IMR-90 (cell line): ENCODE measurements at regions of chr2 and their contacts with region 1.

Region 1: DNA sequence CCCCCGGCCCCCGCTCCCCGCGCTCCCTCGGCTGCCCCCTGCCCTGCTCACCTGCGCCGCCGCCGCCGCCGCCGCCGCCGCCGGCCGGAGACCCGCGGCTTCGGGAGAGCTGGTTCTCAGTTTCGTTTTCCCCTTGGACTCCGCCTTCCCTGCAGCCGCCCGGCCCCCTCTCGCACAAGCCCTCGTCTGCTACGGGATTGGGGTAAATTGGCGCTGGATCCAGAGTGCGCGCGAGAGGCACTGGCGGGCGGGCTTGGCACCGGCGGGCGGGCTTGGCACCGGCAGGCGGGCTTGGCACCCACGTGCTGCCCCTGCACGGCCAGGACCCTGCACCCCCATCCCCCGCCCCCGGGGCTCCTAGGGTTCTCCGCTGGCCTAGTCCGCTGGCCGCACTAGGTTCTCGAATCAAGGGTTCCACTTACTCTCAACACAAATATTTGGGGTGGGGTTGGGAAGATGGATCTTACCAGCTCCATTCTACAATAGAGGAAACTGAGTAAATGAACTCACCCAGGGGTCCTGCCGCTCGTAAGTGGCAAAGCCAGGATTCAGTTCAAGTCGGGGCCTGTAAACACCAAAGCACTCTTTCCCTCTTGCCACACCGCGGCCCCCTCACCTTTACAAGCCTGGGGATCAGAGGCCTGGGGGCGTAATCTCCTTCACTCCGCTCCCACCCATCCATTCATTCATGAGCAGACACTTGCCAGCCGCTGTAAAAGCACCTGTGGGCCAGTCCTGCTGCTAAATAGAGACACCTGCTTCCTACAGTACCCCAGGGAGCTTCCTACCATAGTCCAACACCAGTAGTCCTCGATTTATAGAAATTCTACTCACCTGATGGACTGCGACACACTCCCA is at the start of gene EIF2AK2:
- DNase-seq: peak; percentile 76
- ATAC-seq: peak; percentile 98
- H3K4me3 ChIP-seq: peak within 1 kb of the TSS; percentile 83
- H3K27ac ChIP-seq: peak within 1 kb of the TSS; percentile 69
- H3K4me1 ChIP-seq: peaks cover 5% of the 10 kb centered on the region; the same call in 1 of the 2 replicates
- H3K27me3 ChIP-seq: no peaks in the 10 kb centered on the region
- CTCF ChIP-seq: no peak
- POLR2A ChIP-seq: no peak
- RAD21 ChIP-seq: no peak
- total RNA-seq, gene EIF2AK2: 16.8 and 32.2 TPM in 2 replicates

Region 2: DNA sequence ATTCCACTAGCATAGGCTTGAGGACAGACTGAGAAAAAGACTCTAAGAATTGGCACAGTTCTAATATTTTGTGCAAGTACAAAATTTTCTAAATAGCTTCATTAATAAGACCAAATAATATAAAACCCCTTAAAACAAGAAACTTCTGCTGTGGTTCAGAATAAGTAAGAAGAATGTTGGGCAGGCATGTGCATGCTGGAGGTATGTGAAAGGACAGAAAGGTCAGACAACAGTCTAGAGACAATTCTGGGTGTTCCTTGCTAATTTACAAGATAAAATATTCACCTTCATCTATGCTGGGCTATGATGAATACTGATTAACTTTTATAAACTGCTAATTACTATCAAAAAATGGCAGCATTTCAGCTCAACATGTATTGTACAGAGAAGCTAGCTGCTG is 54.1 kb after region 1 on chr2:
- CTCF ChIA-PET with region 1: no interaction called
- POLR2A ChIA-PET with region 1: no interaction called
- dilution Hi-C with region 1: no loop called
- in situ Hi-C with region 1: no loop called
- intact Hi-C with region 1: loop called (anchors 5 kb)
- DNase-seq: peak; percentile 26
- ATAC-seq: peak; percentile 51
- H3K4me3 ChIP-seq: no peak overlapping the region
- H3K27ac ChIP-seq: no peak overlapping the region
- H3K4me1 ChIP-seq: no peaks in the 10 kb centered on the region
- H3K27me3 ChIP-seq: no peaks in the 10 kb centered on the region
- CTCF ChIP-seq: no peak
- POLR2A ChIP-seq: no peak
- RAD21 ChIP-seq: no peak

Region 3: GRCh38 chr2:37890893-37891495 is 733.9 kb after region 1 on chr2:
- CTCF ChIA-PET with region 1: no interaction called
- POLR2A ChIA-PET with region 1: no interaction called
- dilution Hi-C with region 1: no loop called
- in situ Hi-C with region 1: loop called (anchors 25 kb)
- intact Hi-C with region 1: loop called (anchors 10 kb)
- DNase-seq: peak; percentile 62
- ATAC-seq: peak; percentile 91
- H3K4me3 ChIP-seq: no peak overlapping the region
- H3K27ac ChIP-seq: no peak overlapping the region
- H3K4me1 ChIP-seq: no peaks in the 10 kb centered on the region
- H3K27me3 ChIP-seq: 0 out of 2 replicates have a peak, but pooled peaks cover 4% of the 10 kb centered on the region
- CTCF ChIP-seq: peak; percentile 82
- POLR2A ChIP-seq: no peak
- RAD21 ChIP-seq: peak; percentile 82